Calu3 (cell line): ENCODE measurements at regions of chr7 and their contacts with region 1.

Region 1: GRCh38 chr7:33334349-33334748 is 205.0 kb downstream of the BBS9 start:
- DNase-seq: peak; percentile 28
- H3K4me3 Mint-ChIP-seq: no peak overlapping the region
- H3K27ac Mint-ChIP-seq: no peak overlapping the region
- H3K4me1 Mint-ChIP-seq: no peaks in the 10 kb centered on the region
- H3K27me3 Mint-ChIP-seq: peaks cover 15% of the 10 kb centered on the region
- CTCF ChIP-seq: peak; percentile 58

Region 2: DNA sequence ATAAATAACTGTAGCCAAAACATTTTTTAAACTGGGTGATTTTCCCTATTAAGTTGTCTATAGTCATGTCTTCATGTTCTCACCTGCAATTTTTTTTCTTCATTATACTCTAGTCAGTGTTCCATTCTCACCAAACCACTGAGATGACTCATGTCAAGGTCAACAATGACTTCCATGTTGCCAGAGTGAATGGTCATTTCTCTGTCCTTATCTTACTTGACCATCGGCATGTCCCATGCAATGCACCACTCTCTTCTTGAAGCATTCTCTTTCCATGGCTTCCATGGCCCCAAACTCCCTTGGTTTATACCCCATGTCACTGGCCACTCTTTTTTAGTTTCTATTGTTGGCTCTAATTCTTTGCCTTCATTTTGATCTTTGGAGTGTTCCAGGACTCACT is 1473.4 kb before region 1 on chr7:
- CTCF ChIA-PET with region 1: no interaction called
- intact Hi-C with region 1: loop called (anchors 10 kb)
- DNase-seq: peak; percentile 37
- H3K4me3 Mint-ChIP-seq: no peak overlapping the region
- H3K27ac Mint-ChIP-seq: peak overlapping the region; percentile 2
- H3K4me1 Mint-ChIP-seq: peaks cover 16% of the 10 kb centered on the region
- H3K27me3 Mint-ChIP-seq: no peaks in the 10 kb centered on the region
- CTCF ChIP-seq: no peak

Region 3: GRCh38 chr7:33287748-33288147 is 46.6 kb before region 1 on chr7:
- CTCF ChIA-PET with region 1: no interaction called
- intact Hi-C with region 1: no loop called
- DNase-seq: no peak
- H3K4me3 Mint-ChIP-seq: no peak overlapping the region
- H3K27ac Mint-ChIP-seq: no peak overlapping the region
- H3K4me1 Mint-ChIP-seq: no peaks in the 10 kb centered on the region
- H3K27me3 Mint-ChIP-seq: no peaks in the 10 kb centered on the region
- CTCF ChIP-seq: no peak

Region 4: DNA sequence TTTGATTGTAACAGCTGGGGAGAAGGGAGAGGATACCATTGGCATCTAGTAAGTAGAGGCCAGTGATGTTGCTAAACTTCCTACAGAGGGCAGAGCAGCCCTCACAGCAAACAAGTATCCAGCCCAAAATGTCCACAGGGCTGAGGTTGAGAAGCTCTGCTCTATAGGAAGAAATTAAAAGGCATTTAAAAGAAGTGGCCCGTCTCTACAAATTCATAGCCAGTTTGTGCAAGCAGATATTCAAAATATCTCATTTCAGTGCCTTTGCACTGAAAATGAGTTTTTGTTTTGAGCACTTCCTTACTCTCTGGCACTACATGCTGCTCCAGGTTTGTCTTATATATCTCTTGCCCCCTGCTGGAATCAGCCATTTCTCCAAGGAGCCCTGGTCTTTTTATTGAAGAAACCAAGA is 125.0 kb after region 1 on chr7:
- CTCF ChIA-PET with region 1: no interaction called
- intact Hi-C with region 1: loop called (anchors 2 kb)
- DNase-seq: peak; percentile 37
- H3K4me3 Mint-ChIP-seq: no peak overlapping the region
- H3K27ac Mint-ChIP-seq: no peak overlapping the region
- H3K4me1 Mint-ChIP-seq: no peaks in the 10 kb centered on the region
- H3K27me3 Mint-ChIP-seq: no peaks in the 10 kb centered on the region
- CTCF ChIP-seq: peak; percentile 59

Region 5: DNA sequence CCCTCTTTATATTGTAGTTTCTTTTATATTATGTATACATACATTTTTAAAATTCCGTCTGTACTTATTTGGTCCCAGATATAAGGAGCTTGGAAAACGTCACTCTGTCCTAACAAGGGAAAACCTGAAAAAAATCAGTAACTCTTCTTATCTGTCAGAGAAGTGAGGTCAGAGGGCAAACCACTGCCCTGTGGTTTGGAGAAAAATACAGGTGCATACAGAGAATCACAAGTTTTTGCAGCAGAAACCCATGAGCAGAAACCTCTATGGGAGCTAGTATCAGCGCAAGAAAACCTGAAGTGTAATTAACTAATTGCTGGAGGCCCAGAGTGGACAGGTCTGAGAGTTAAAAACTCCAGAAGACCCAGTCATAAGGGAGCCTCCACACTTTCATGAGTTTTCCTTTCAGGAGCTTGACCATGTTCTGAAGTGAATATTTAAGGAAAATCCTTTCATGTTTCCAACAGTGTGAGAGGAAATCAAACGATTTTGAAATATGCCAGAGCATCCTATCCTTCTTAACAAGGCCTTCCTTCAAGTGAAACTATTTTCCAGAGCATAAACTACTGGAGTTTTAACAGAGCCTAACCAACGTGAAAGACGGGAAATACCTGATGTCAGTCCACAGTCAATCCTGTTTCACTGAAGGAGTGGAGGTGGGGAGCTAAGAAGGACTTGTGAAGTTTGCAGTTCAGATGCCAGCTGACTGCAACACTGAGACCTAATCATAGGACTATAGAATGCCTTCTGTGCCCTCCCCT is 280.2 kb after region 1 on chr7:
- CTCF ChIA-PET with region 1: no interaction called
- intact Hi-C with region 1: loop called (anchors 5 kb)
- DNase-seq: no peak
- H3K4me3 Mint-ChIP-seq: no peak overlapping the region
- H3K27ac Mint-ChIP-seq: no peak overlapping the region
- H3K4me1 Mint-ChIP-seq: no peaks in the 10 kb centered on the region
- H3K27me3 Mint-ChIP-seq: no peaks in the 10 kb centered on the region
- CTCF ChIP-seq: no peak

Region 6: DNA sequence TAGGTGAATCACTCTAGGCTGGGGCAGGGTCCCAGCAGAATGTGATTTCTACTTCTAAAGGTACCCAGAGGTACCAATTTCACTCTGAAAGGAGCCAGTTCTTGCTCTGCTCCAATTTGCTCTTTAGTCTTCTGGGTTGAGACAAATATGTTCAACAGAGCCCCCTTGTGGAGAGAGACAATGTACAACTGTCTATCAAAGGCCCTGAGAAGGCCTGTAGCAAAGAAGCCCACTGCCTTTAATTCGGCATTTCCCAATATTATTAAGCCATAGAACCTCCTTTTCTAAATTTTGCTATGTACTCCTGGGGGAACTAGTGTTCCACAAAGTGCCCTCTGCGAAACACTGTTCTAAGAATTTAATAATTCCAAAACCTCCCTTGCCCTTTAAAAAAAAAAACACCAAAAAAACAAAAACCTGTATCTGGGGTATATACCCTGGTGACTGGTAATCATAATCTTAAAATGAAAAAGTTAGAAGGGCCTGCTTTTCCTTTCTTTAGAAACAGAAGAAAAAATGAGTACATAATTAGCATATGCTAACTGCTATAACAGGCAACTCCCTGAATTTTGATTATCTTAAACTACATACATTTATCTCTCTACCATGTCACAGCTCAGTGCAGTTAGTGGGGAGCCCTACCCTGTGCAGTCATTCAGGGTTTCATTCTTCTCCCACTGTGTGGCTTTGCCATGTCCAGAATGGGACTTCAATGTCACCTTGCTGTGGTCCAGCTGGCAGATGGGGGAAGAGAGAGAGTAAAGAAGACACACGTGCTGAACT is 410.1 kb after region 1 on chr7:
- CTCF ChIA-PET with region 1: no interaction called
- intact Hi-C with region 1: loop called (anchors 10 kb)
- DNase-seq: no peak
- H3K4me3 Mint-ChIP-seq: no peak overlapping the region
- H3K27ac Mint-ChIP-seq: no peak overlapping the region
- H3K4me1 Mint-ChIP-seq: no peaks in the 10 kb centered on the region
- H3K27me3 Mint-ChIP-seq: peaks cover 29% of the 10 kb centered on the region
- CTCF ChIP-seq: peak; percentile 19